Endothelial cell of umbilical vein (primary cell): ENCODE measurements at regions of chr11 and their contacts with region 1.

Region 1: GRCh38 chr11:67630228-67630942 is 648 bp upstream of the NUDT8 start:
- DNase-seq: peak; percentile 96
- H3K4me3 ChIP-seq: peak overlapping the region; percentile 39 to 60 (median 55)
- H3K27ac ChIP-seq: peak overlapping the region; percentile 58
- H3K4me1 ChIP-seq: peaks cover 4% of the 10 kb centered on the region
- H3K27me3 ChIP-seq: no peaks in the 10 kb centered on the region
- CTCF ChIP-seq: peak; percentile 79 to 80
- POLR2A ChIP-seq: peak; percentile 75

Region 2: DNA sequence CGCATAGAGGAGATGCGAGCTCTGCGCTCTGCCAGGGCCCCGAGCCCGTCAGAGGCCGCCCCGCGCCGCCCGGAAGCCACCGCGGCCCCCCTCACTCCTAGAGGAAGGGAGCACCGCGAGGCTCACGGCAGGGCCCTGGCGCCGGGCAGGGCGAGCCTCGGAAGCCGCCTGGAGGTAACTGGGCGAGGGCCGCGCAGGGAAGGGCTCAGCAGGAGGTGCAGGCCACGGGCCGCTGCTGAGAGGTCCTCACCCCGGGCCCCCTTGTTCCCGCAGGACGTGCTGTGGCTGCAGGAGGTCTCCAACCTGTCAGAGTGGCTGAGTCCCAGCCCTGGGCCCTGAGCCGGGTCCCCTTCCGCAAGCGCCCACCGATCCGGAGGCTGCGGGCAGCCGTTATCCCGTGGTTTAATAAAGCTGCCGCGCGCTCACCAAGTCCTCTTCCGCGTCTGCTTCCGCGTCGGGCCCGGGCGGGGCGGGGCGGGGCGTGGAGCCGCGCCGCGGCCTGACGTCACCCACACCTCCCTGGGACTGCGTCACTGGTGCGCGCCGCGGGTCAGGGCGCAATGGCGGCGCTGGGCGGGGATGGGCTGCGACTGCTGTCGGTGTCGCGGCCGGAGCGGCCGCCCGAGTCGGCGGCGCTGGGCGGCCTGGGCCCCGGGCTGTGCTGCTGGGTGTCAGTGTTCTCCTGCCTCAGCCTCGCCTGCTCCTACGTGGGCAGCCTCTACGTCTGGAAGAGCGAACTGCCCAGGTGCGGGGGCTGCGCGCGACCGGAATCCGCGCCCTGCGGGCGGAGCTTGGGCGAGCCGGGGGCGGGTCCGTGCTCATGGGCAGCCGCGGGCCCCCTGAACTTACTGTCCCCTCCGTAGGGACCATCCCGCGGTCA is 787.2 kb before region 1 on chr11 and contains the start of gene RCE1:
- CTCF ChIA-PET with region 1: no interaction called
- POLR2A ChIA-PET with region 1: no interaction called
- dilution Hi-C with region 1: no loop called
- intact Hi-C with region 1: loop called (anchors 10 kb)
- DNase-seq: peak; percentile 91
- H3K4me3 ChIP-seq: peak within 1 kb of the TSS; percentile 63 to 95 (median 74)
- H3K27ac ChIP-seq: peak within 1 kb of the TSS; percentile 97
- H3K4me1 ChIP-seq: peaks cover 27% of the 10 kb centered on the region
- H3K27me3 ChIP-seq: no peaks in the 10 kb centered on the region
- CTCF ChIP-seq: no peak
- POLR2A ChIP-seq: peak; percentile 94
- total RNA-seq, gene RCE1: 26.9 and 27.8 TPM in 2 replicates

Region 3: DNA sequence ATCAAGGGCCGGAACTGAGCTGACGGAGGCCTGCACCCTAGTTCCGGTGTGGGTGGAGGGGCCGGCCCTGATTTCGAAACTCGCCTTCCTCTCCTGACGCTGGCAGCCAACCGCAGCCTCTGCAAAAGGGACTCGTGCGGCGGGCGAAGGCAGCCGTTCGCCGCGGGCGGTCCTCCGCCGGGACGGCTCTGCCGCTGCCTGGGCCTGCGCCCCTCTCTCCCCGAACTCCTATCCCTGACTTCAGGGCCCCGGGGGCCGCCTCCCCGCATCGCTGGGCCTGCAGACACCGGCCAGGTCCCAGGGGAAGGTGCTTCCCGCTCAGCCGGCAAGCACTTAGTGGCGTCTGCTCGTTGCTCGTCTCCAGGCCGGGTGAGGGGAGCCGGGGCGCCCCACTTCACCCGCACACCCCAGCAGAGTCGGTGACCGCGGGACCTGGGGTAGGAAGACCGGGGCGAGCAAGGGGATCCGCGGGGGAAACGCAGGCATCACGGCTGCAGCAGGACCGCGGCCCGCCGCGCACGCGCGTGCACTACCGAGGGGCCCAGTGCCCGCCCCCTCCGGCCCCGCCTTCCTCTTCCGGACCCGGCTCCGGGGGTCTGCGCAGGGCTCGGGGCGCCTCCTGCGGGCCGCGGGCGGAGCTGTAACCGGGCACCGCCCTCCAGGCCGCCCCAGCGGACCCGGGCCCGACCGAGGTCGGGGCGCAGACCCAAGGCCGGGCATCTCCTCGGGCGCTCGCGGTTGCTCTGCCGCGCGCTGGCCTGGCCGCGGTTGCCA is 341.7 kb before region 1 on chr11:
- CTCF ChIA-PET with region 1: no interaction called
- POLR2A ChIA-PET with region 1: no interaction called
- dilution Hi-C with region 1: no loop called
- intact Hi-C with region 1: no loop called
- DNase-seq: peak; percentile 86
- H3K4me3 ChIP-seq: peak overlapping the region; percentile 52 to 65 (median 54)
- H3K27ac ChIP-seq: peak overlapping the region; percentile 61
- H3K4me1 ChIP-seq: peaks cover 22% of the 10 kb centered on the region
- H3K27me3 ChIP-seq: no peaks in the 10 kb centered on the region
- CTCF ChIP-seq: peak; percentile 44 to 53
- POLR2A ChIP-seq: no peak

Region 4: DNA sequence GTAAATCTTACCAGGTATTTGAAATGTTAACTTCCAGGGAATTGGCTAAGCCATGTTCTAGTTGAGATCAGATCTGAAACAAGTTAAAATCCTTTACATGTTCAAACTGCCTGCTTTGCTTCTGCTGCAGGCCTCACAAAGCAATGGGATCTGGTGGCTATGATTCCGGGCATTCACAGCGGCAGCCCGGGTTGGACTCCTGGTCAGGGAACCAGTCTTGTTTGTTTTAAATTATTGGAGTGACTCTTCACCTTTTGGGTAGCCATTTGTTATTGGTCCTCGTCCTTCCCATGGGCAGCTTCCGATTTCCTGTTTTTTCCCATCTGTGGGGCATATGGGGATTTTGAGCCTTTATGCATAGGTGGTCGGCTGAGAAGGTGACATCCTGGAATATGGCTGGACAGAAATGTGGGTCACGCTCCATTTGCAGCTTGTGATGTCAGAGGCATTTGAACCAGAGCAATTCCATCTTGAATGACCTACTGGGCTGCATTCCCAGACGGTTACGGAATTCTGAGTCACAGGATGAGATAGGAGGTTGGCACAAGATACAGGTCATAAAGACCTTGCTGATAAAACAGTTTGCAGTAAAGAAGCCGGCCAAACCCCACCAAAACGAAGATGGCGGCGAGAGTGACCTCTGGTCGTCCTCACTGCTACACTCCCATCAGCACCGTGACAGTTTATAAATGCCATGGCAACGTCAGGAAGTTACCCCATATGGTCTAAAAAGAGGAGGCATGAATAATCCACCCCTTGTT is 66.9 kb before region 1 on chr11:
- CTCF ChIA-PET with region 1: interaction called, 4 read pairs
- POLR2A ChIA-PET with region 1: no interaction called
- dilution Hi-C with region 1: no loop called
- intact Hi-C with region 1: loop called (anchors 1 kb)
- DNase-seq: peak; percentile 94
- H3K4me3 ChIP-seq: no peak overlapping the region
- H3K27ac ChIP-seq: peak overlapping the region; percentile 94
- H3K4me1 ChIP-seq: peaks cover 15% of the 10 kb centered on the region
- H3K27me3 ChIP-seq: no peaks in the 10 kb centered on the region
- CTCF ChIP-seq: no peak
- POLR2A ChIP-seq: peak; percentile 40

Region 5: GRCh38 chr11:67606492-67607201 is 23.7 kb before region 1 on chr11 and contains the start of gene NDUFV1:
- CTCF ChIA-PET with region 1: interaction called, 5 read pairs
- POLR2A ChIA-PET with region 1: no interaction called
- dilution Hi-C with region 1: no loop called
- intact Hi-C with region 1: loop called (anchors 1 kb)
- DNase-seq: peak; percentile 94
- H3K4me3 ChIP-seq: peak within 1 kb of the TSS; percentile 32 to 92 (median 61)
- H3K27ac ChIP-seq: peak within 1 kb of the TSS; percentile 25
- H3K4me1 ChIP-seq: peaks cover 6% of the 10 kb centered on the region
- H3K27me3 ChIP-seq: no peaks in the 10 kb centered on the region
- CTCF ChIP-seq: peak; percentile 48 to 78
- POLR2A ChIP-seq: peak; percentile 88
- total RNA-seq, gene NDUFV1: 179 and 191 TPM in 2 replicates

Region 6: DNA sequence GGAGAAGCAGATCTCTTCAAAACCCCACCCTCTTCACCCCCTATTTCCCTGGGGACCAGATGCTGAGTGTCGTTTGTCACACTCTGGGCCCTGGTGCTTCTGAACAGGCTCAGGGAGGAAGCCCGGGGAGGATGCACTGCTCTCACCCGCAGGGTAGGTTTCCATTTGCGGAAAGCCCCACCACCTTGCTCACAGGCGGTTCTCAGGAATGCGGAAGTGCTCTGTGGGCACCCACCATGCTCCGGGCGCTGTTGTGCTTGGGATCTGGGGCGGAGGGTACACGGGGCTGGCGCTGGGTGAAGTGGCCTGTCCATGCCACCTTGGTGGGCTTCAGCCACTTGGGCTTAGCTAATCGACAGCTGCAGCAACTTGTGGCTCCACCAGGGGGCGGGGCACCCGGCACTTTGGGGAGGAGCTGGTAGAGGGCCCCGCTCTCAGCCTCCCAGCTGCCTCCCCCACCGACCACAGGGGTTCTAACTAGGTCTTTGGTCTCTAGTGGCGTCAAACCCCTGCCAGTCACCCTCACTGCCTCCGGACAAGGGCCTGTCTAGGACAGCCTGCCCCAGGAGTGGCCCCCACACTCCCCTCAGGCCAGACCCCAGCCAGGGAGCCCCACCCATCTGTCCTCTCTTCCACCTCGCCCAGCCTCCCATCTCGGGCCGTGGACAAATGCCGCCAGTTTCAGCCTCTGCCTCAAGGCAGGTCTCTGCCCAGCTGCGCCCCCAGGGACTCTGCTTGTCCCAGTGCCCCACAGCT is 16.2 kb before region 1 on chr11:
- CTCF ChIA-PET with region 1: interaction called, 98 read pairs
- POLR2A ChIA-PET with region 1: no interaction called
- dilution Hi-C with region 1: no loop called
- intact Hi-C with region 1: no loop called
- DNase-seq: peak; percentile 25
- H3K4me3 ChIP-seq: no peak overlapping the region
- H3K27ac ChIP-seq: no peak overlapping the region
- H3K4me1 ChIP-seq: no peaks in the 10 kb centered on the region
- H3K27me3 ChIP-seq: peaks cover 14 to 21% of the 10 kb centered on the region in 2 experiments
- CTCF ChIP-seq: peak; percentile 63 to 92
- POLR2A ChIP-seq: no peak

Region 7: GRCh38 chr11:67648140-67649123 is 18.0 kb after region 1 on chr11:
- CTCF ChIA-PET with region 1: interaction called, 14 read pairs
- POLR2A ChIA-PET with region 1: interaction called, 5 read pairs
- dilution Hi-C with region 1: no loop called
- intact Hi-C with region 1: no loop called
- DNase-seq: no peak
- H3K4me3 ChIP-seq: no peak overlapping the region
- H3K27ac ChIP-seq: no peak overlapping the region
- H3K4me1 ChIP-seq: no peaks in the 10 kb centered on the region
- H3K27me3 ChIP-seq: no peaks in the 10 kb centered on the region
- CTCF ChIP-seq: peak in 1 of 2 donors; percentile 2
- POLR2A ChIP-seq: no peak

Region 8: GRCh38 chr11:67656278-67656922 is 26.0 kb after region 1 on chr11:
- CTCF ChIA-PET with region 1: interaction called, 92 read pairs
- POLR2A ChIA-PET with region 1: interaction called, 5 read pairs
- dilution Hi-C with region 1: no loop called
- intact Hi-C with region 1: loop called (anchors 1 kb)
- DNase-seq: peak; percentile 46
- H3K4me3 ChIP-seq: no peak overlapping the region
- H3K27ac ChIP-seq: no peak overlapping the region
- H3K4me1 ChIP-seq: no peaks in the 10 kb centered on the region
- H3K27me3 ChIP-seq: no peaks in the 10 kb centered on the region
- CTCF ChIP-seq: no peak
- POLR2A ChIP-seq: no peak